ENCODE measurements at regions of chr7 and their contacts with region 1.

Region 1: GRCh38 chr7:157336383-157337315 is at the start of gene DNAJB6:
- DNase-seq: peak; percentile 90
- total RNA-seq, gene DNAJB6: 85.9 and 115 TPM in 2 replicates

Region 2: GRCh38 chr7:157555313-157555712 is 218.7 kb after region 1 on chr7:
- in situ Hi-C with region 1: loop called (anchors 10 kb)
- DNase-seq: no peak

Measured in G401 (cell line).